B cell (primary cell): ENCODE measurements at regions of chr3 and their contacts with region 1.

Region 1: DNA sequence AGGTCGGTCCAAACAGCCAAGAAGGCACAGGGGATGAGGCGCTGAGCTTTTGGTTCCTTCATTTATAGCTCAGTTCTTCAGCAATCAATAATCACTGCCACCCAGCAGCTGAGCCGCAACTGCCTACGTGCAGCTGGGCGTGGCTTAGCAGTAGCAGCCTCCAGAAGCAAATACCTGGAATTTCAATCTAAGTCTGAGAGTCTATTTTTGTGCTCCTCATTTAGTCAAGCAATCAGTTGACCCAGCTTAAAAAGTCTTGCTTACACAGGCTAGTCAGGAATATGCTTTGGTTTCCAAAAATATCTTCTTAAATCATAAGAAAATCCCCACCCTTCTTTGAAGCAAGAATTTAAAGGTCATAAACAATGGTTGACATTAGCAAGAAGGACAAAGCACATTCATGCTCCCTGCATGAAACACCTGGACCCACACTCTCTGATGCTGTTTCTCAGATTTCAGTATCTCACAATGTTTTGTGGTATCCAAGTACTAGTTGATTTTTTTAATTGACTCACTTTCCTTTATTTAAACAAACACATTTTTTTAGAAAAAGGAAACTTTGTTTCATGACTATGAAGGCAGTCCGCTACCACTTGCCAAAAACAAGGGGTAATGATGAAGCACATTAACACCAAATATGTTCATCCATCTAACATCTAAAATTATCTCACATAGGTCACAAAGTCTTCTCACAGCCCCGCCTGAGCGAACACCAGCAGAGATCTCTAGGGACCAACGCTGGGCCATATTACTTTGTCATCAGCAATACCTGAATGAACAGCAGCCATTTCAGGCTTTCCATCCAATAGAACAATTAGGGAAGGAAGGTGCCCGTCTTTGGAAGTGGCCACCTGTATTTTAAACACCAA is 106.1 kb downstream of the OXNAD1 start:
- DNase-seq: peak; percentile 77
- ATAC-seq: peak; percentile 53
- H3K4me3 ChIP-seq: peak overlapping the region in 1 of 5 experiments; percentile 15
- H3K4me3 Mint-ChIP-seq: peak overlapping the region; percentile 66
- H3K27ac ChIP-seq: peak overlapping the region; percentile 62 to 87
- H3K27ac Mint-ChIP-seq: peak overlapping the region; percentile 91
- H3K4me1 ChIP-seq: peaks cover 75 to 77% of the 10 kb centered on the region in 2 donors
- H3K4me1 Mint-ChIP-seq: peaks cover 73% of the 10 kb centered on the region
- H3K27me3 ChIP-seq: no peaks in the 10 kb centered on the region
- H3K27me3 Mint-ChIP-seq: no peaks in the 10 kb centered on the region
- CTCF ChIP-seq: no peak

Region 2: DNA sequence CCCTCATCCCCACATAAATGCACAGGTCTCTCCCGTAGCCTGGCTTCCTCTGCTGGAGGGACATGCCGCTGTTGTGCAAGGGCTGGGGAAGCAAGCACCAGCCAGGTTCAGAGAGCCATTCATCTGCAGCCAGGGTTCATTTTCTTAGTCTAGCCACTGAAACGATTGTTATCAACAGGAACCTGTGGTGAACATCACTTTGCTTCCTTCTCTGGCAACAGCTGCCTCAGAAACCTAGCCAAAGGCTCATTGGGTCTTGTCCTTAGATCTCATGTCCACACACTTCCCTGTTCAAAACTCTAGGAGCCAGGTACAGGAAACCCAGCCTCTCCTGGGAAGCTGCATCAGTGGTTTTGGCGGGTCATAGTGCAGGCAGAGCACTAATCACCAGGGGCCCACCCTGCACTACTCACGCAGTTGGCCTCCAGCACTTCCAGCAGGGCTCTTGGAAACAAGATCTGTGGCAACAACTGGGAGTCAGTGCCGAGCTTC is 59.1 kb before region 1 on chr3:
- CTCF ChIA-PET with region 1: no interaction called
- POLR2A ChIA-PET with region 1: no interaction called
- intact Hi-C with region 1: loop called (anchors 5 kb)
- DNase-seq: peak; percentile 61
- ATAC-seq: peak; percentile 68
- H3K4me3 ChIP-seq: no peak overlapping the region
- H3K4me3 Mint-ChIP-seq: peak overlapping the region; percentile 42
- H3K27ac ChIP-seq: peak overlapping the region; percentile 51 to 68
- H3K27ac Mint-ChIP-seq: peak overlapping the region; percentile 88
- H3K4me1 ChIP-seq: peaks cover 14 to 18% of the 10 kb centered on the region in 2 donors
- H3K4me1 Mint-ChIP-seq: peaks cover 22% of the 10 kb centered on the region
- H3K27me3 ChIP-seq: no peaks in the 10 kb centered on the region
- H3K27me3 Mint-ChIP-seq: no peaks in the 10 kb centered on the region
- CTCF ChIP-seq: no peak

Region 3: DNA sequence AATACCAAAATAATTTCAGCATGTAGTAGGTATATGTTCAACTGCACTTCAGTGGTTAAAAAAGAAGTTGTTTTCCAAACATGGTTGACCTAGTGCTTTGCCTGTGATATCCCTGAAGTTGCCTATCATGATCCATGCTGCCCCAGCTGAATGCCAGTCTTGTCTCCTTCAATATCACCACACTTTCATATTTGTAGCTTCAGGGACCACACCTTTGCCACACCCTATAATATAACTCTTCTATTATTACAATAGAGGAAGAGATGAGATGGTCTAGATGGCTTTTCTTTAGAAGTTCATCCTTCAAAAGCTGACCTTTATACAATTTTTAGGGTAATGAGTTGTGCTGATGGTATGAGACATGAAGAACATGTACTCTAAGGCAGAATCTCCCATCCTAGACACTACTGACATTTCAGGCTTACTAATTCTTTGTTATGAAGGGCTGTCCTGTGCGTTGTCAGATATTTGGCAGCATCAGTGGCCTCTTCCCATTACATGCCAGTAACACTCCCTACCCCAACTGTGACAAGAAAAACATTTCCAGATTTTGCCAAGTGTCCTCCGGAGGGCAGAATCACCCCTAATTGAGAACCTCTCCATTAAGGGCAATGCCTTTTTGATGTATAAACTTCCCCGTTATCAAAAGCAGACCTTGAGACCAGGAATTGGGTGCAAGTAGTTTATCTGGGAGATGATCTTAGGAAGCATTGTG is 437.4 kb after region 1 on chr3:
- CTCF ChIA-PET with region 1: no interaction called
- POLR2A ChIA-PET with region 1: no interaction called
- intact Hi-C with region 1: no loop called
- DNase-seq: no peak
- ATAC-seq: no peak
- H3K4me3 ChIP-seq: no peak overlapping the region
- H3K4me3 Mint-ChIP-seq: no peak overlapping the region
- H3K27ac ChIP-seq: no peak overlapping the region
- H3K27ac Mint-ChIP-seq: no peak overlapping the region
- H3K4me1 ChIP-seq: no peaks in the 10 kb centered on the region
- H3K4me1 Mint-ChIP-seq: no peaks in the 10 kb centered on the region
- H3K27me3 ChIP-seq: no peaks in the 10 kb centered on the region
- H3K27me3 Mint-ChIP-seq: no peaks in the 10 kb centered on the region
- CTCF ChIP-seq: no peak